ENCODE measurements at regions of chr3 and their contacts with region 1.

Region 1: GRCh38 chr3:147383617-147384016 is 22.7 kb downstream of the ZIC4 start:
- DNase-seq: no peak
- H3K4me3 ChIP-seq: no peak overlapping the region
- H3K27ac ChIP-seq: no peak overlapping the region
- H3K4me1 ChIP-seq: no peaks in the 10 kb centered on the region
- H3K27me3 ChIP-seq: peaks cover 68% of the 10 kb centered on the region
- CTCF ChIP-seq: no peak

Region 2: DNA sequence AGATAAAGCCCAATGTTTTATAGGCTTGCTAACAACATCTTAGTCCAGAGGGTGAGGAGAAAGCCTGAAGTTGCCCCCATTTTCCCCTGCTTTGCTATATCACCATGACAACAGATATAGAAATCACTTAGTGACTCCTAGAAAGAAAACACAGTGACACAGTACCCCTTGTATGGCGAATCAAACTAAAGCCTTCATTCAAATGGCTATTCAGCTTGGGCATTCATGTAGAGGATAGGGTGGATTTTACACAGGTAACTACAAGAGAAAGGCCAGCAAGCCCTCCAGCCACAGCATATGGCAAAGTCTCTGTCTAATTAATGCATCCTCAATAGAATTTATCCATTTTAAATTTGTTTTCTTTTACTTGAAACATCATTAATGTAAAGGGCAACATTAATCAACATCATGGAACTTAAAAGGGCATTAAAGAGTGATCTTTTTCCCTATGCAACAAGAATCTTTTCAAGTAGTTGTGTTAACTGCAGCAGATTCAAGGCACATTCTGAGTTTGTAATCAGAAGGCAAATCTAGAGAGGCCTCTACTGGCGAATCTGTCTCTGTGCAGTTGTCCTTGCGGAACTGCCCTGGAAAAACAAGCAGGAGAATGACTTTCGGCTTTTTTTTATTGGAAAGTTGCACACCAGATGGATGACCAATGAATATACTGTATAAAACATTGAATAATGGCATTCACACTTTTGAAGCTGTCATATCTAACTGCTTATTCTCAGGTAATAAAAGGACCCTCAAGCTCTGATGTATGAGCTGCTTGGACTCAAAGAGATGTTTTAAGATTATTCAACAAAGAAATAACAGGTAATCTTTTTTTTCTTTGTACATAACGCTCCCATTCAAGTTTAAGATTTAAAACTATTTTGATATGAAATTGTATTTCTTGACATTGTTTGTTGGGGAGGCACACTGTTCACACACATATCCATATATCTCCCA is 692.4 kb after region 1 on chr3:
- intact Hi-C with region 1: loop called (anchors 5 kb)
- DNase-seq: peak; percentile 16
- H3K4me3 ChIP-seq: no peak overlapping the region
- H3K27ac ChIP-seq: no peak overlapping the region
- H3K4me1 ChIP-seq: no peaks in the 10 kb centered on the region
- H3K27me3 ChIP-seq: no peaks in the 10 kb centered on the region
- CTCF ChIP-seq: peak; percentile 45